ENCODE measurements at regions of chr22 and their contacts with region 1.

Region 1: GRCh38 chr22:31084811-31085497 is 3.8 kb downstream of the SMTN start:
- DNase-seq: peak; percentile 77 to 89 (median 84)
- H3K4me3 ChIP-seq: peak overlapping the region; percentile 24 to 86 (median 52)
- H3K27ac ChIP-seq: peak overlapping the region; percentile 6 to 90 (median 72)
- H3K4me1 ChIP-seq: peaks cover 0 to 33% of the 10 kb centered on the region in 2 donors
- H3K27me3 ChIP-seq: no peaks in the 10 kb centered on the region
- CTCF ChIP-seq: peak; percentile 64 to 86 (median 76)
- POLR2A ChIP-seq: peak; percentile 20 to 27

Region 2: GRCh38 chr22:30947816-30948454 is 137.0 kb before region 1 on chr22:
- intact Hi-C with region 1: loop called (anchors 2 to 5 kb)
- DNase-seq: no peak
- H3K4me3 ChIP-seq: no peak overlapping the region
- H3K27ac ChIP-seq: no peak overlapping the region
- H3K4me1 ChIP-seq: peaks cover 0 to 12% of the 10 kb centered on the region in 2 donors
- H3K27me3 ChIP-seq: no peaks in the 10 kb centered on the region
- CTCF ChIP-seq: peak; percentile 32 to 80 (median 62)
- POLR2A ChIP-seq: no peak

Region 3: DNA sequence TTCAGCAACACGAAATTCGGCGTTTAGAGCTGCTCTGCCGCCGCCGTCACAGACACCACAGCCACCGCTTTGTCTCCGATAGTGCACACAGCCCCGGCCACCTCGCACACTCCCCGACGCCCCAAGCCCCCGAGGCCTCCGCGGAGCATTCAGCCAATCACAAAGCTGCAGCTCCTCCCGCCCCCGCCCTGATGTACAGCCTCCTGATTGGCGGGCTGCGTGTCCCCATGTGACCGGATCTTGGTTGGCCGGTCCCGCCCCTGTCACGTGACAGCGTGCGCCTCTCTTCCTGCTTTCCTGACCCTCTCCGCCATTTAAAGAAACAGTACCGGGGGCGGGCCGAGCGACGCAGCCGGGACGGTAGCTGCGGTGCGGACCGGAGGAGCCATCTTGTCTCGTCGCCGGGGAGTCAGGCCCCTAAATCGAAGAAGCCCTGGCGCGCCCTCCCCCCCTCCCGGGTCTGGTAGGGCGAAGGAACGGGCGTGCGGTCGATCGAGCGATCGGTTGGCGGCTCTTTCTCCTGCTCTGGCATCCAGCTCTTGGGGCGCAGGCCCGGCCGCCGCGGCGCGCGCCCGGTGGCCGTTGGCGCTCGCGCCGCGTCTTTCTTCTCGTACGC is 115.9 kb before region 1 on chr22 and contains the start of gene TUG1:
- intact Hi-C with region 1: loop called in 1 of 2 experiments (anchors 5 kb)
- DNase-seq: peak; percentile 98 to 100 (median 99)
- H3K4me3 ChIP-seq: peak within 1 kb of the TSS; percentile 37 to 88 (median 62)
- H3K27ac ChIP-seq: peak within 1 kb of the TSS; percentile 56 to 98 (median 97)
- H3K4me1 ChIP-seq: peaks cover 8 to 40% of the 10 kb centered on the region in 2 donors
- H3K27me3 ChIP-seq: no peaks in the 10 kb centered on the region
- CTCF ChIP-seq: peak in 1 of 6 experiments; percentile 26
- POLR2A ChIP-seq: peak; percentile 52 to 91
- total RNA-seq, gene TUG1: 33.3 to 90.5 (median 55.0) TPM

Region 4: DNA sequence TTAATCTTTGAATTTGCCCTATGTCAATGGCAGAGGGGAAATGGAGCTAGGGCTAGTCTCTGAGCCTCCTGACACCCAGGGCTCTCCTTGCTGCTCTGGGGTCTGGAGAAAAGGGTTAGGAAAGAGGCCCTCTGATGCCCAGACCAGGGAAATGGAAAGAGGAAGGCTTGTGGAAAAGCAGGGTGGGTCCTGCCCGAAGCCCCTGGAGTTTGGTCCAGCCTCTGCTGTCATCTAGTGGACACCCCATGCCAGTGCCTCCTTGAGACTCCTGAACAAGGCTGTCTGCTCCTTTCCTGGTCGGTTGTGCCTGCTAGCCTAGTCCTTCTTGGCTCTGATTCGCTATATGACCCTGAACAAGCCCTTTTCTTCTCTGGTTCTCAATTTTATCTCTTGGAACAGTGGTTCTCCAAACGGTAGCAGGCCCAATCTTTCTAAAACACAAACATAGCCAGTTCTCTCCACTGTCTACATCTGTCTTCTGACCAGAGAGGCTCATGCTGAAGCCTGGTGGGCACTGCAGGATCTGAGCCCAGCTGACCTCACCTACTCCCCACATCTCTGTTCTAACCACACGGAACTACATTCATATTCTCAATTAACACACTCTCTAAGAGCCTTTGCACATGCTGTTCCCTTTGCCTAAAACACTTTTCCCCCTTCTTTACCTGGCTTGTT is 64.1 kb after region 1 on chr22:
- intact Hi-C with region 1: loop called (anchors 5 kb)
- DNase-seq: peak; percentile 63 to 90 (median 83)
- H3K4me3 ChIP-seq: no peak overlapping the region
- H3K27ac ChIP-seq: peak overlapping the region in 2 of 5 donors; percentile 43 to 60
- H3K4me1 ChIP-seq: peaks cover 0 to 9% of the 10 kb centered on the region in 2 donors
- H3K27me3 ChIP-seq: no peaks in the 10 kb centered on the region
- CTCF ChIP-seq: peak; percentile 79 to 98 (median 94)
- POLR2A ChIP-seq: no peak

Region 5: GRCh38 chr22:31230871-31231621 is 146.1 kb after region 1 on chr22:
- intact Hi-C with region 1: loop called in 1 of 2 experiments (anchors 5 kb)
- DNase-seq: peak; percentile 52 to 88 (median 70)
- H3K4me3 ChIP-seq: no peak overlapping the region
- H3K27ac ChIP-seq: peak overlapping the region in 4 of 5 donors; percentile 64 to 79 (median 76)
- H3K4me1 ChIP-seq: peaks cover 19 to 48% of the 10 kb centered on the region in 2 donors
- H3K27me3 ChIP-seq: no peaks in the 10 kb centered on the region
- CTCF ChIP-seq: peak; percentile 49 to 87 (median 80)
- POLR2A ChIP-seq: no peak

Region 6: GRCh38 chr22:31272522-31273446 is 187.8 kb after region 1 on chr22:
- intact Hi-C with region 1: no loop called
- DNase-seq: peak in 6 of 7 donors; percentile 58 to 85 (median 72)
- H3K4me3 ChIP-seq: no peak overlapping the region
- H3K27ac ChIP-seq: no peak overlapping the region
- H3K4me1 ChIP-seq: no peaks in the 10 kb centered on the region
- H3K27me3 ChIP-seq: no peaks in the 10 kb centered on the region
- CTCF ChIP-seq: peak; percentile 63 to 82 (median 73)
- POLR2A ChIP-seq: no peak

Region 7: GRCh38 chr22:31308181-31308580 is 223.2 kb after region 1 on chr22:
- intact Hi-C with region 1: no loop called
- DNase-seq: no peak
- H3K4me3 ChIP-seq: no peak overlapping the region
- H3K27ac ChIP-seq: no peak overlapping the region
- H3K4me1 ChIP-seq: no peaks in the 10 kb centered on the region
- H3K27me3 ChIP-seq: no peaks in the 10 kb centered on the region
- CTCF ChIP-seq: no peak
- POLR2A ChIP-seq: no peak

Measured in adrenal gland (tissue), 19 donors.